ENCODE measurements at regions of chr10 and their contacts with region 1.

Region 1: GRCh38 chr10:125085258-125086056 is 74.9 kb downstream of the CTBP2 start:
- DNase-seq: no peak
- H3K4me3 Mint-ChIP-seq: peak overlapping the region; percentile 69
- H3K27ac Mint-ChIP-seq: peak overlapping the region; percentile 100
- H3K4me1 Mint-ChIP-seq: peaks cover 32% of the 10 kb centered on the region
- H3K27me3 Mint-ChIP-seq: no peaks in the 10 kb centered on the region
- CTCF ChIP-seq: no peak

Region 2: DNA sequence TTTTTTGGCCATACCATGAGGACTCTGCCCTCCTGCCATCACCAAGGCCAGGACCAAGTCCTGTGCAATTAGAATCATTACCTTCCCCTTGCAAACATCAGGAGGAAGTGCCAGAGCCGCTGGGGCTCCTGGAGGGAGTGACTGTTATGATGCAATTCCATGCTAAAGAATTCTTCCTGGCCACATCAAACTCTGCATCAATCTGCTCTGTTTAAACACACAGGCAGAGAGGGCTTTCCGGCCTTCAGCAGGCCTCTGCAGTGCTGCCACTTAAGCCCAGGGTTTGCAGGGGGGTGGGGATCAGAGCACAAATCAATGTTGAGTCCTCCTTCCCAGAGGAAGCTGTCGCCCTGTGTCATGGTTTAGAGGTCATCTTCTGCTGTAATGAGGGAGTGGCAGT is 16.8 kb after region 1 on chr10:
- CTCF ChIA-PET with region 1: interaction called, 10 read pairs
- intact Hi-C with region 1: no loop called
- DNase-seq: peak; percentile 39
- H3K4me3 Mint-ChIP-seq: no peak overlapping the region
- H3K27ac Mint-ChIP-seq: peak overlapping the region; percentile 44
- H3K4me1 Mint-ChIP-seq: peaks cover 9% of the 10 kb centered on the region
- H3K27me3 Mint-ChIP-seq: no peaks in the 10 kb centered on the region
- CTCF ChIP-seq: no peak